ENCODE measurements at regions of chr7 and their contacts with region 1.

Region 1: GRCh38 chr7:104923010-104923421 is 91.0 kb upstream of the KMT2E start:
- DNase-seq: no peak
- ATAC-seq: peak; percentile 92

Region 2: GRCh38 chr7:104231054-104232046 is 691.7 kb before region 1 on chr7:
- intact Hi-C with region 1: loop called (anchors 2 kb)
- DNase-seq: no peak
- ATAC-seq: peak; percentile 65

Region 3: GRCh38 chr7:104883718-104884452 is 39.1 kb before region 1 on chr7:
- intact Hi-C with region 1: loop called (anchors 1 kb)
- DNase-seq: peak; percentile 93
- ATAC-seq: peak; percentile 97

Region 4: GRCh38 chr7:105493923-105494315 is 570.9 kb after region 1 on chr7:
- intact Hi-C with region 1: loop called (anchors 5 kb)
- DNase-seq: no peak
- ATAC-seq: no peak

Measured in Right ventricle myocardium inferior (tissue), 1 donor.